ENCODE measurements at regions of chr7 and their contacts with region 1.

Region 1: DNA sequence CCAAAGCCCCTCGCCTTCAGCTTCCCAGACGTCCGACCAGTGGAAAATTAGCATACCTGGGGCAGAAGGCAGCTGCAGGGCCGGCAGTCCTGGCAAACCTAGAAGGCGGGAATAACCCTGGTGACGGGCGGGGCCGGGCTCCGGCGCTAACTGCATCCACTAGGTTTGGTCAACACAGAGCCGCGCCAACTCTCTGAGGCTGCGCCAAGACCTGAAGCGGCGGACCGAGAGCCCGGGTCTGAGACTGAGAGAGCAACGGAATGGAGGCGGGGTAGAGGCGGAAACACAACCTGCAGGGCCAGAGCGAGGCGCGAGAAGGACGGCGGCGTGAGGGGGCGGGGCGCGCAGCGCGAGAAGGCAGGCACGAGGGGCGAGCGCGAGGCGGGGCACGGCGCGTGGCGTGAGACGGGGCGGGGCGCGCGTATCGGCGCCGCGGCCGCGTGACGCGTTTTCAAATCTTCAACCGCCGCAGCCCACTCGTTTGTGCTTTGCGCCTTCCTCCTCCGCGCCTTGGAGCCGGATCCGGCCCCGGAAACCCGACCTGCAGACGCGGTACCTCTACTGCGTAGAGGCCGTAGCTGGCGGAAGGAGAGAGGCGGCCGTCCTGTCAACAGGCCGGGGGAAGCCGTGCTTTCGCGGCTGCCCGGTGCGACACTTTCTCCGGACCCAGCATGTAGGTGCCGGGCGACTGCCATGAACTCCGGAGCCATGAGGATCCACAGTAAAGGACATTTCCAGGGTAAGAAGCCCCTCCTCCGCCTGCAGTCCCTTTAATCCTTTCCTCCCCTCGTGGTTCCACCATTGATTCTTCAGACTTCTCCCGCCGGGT is at the starts of genes DBF4 and SLC25A40:
- DNase-seq: peak; percentile 91 to 99
- H3K4me3 ChIP-seq: peak within 1 kb of the TSS; percentile 92
- H3K27ac ChIP-seq: peak within 1 kb of the TSS; percentile 85
- H3K4me1 ChIP-seq: peaks cover 28% of the 10 kb centered on the region
- H3K27me3 ChIP-seq: no peaks in the 10 kb centered on the region
- CTCF ChIP-seq: no peak
- total RNA-seq, gene DBF4: 47.9 and 52.7 TPM in 2 replicates
- total RNA-seq, gene SLC25A40: 33.5 and 47.7 TPM in 2 replicates

Region 2: GRCh38 chr7:87219545-87220025 is 656.7 kb before region 1 on chr7 and contains the start of gene TMEM243:
- CTCF ChIA-PET with region 1: no interaction called
- POLR2A ChIA-PET with region 1: no interaction called
- intact Hi-C with region 1: loop called (anchors 10 kb)
- DNase-seq: peak; percentile 57 to 64
- H3K4me3 ChIP-seq: peak within 1 kb of the TSS; percentile 94
- H3K27ac ChIP-seq: peak within 1 kb of the TSS; percentile 36
- H3K4me1 ChIP-seq: peaks cover 20% of the 10 kb centered on the region
- H3K27me3 ChIP-seq: no peaks in the 10 kb centered on the region
- CTCF ChIP-seq: no peak
- total RNA-seq, gene TMEM243: 24.6 and 26.5 TPM in 2 replicates

Region 3: GRCh38 chr7:87797798-87798403 is 78.4 kb before region 1 on chr7:
- CTCF ChIA-PET with region 1: no interaction called
- POLR2A ChIA-PET with region 1: no interaction called
- intact Hi-C with region 1: loop called (anchors 5 kb)
- DNase-seq: peak in 1 of 2 experiments; percentile 35
- H3K4me3 ChIP-seq: no peak overlapping the region
- H3K27ac ChIP-seq: no peak overlapping the region
- H3K4me1 ChIP-seq: no peaks in the 10 kb centered on the region
- H3K27me3 ChIP-seq: no peaks in the 10 kb centered on the region
- CTCF ChIP-seq: peak; percentile 74

Region 4: DNA sequence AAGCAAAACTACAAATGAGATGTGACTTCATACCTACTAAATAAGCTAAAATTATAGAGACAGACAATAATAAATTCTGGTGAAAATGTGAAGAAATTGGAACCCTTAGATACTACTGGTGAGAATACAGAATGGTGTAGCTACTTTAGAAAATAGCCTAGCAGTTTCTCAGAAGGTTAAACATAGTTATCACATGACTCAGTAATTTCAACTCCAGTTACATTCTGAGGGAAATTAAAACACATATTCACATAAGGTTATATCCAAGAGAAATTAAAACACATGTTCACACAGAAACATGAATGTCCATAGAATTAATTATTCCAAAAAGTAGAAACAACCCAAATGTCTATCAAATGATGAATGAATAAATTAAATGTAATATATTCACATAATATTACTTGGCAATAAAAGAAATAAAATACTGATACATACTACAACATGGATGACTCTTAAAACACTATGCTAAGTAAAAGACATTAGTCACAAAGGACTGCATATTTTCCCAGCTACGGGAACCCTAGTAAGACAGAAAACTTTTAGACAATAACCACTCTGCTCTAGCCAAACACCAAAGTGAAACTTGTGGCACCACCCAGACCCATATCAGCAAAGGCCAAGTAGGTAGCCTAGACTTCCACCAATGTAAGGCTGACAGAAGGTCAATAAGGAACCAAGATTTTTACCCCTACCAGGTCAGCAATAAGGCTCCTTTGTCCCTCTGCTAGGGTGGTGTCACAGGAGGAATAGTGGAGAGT is 25.2 kb before region 1 on chr7:
- CTCF ChIA-PET with region 1: no interaction called
- POLR2A ChIA-PET with region 1: no interaction called
- intact Hi-C with region 1: no loop called
- DNase-seq: no peak
- H3K4me3 ChIP-seq: no peak overlapping the region
- H3K27ac ChIP-seq: no peak overlapping the region
- H3K4me1 ChIP-seq: peaks cover 7% of the 10 kb centered on the region
- H3K27me3 ChIP-seq: no peaks in the 10 kb centered on the region
- CTCF ChIP-seq: no peak

Region 5: DNA sequence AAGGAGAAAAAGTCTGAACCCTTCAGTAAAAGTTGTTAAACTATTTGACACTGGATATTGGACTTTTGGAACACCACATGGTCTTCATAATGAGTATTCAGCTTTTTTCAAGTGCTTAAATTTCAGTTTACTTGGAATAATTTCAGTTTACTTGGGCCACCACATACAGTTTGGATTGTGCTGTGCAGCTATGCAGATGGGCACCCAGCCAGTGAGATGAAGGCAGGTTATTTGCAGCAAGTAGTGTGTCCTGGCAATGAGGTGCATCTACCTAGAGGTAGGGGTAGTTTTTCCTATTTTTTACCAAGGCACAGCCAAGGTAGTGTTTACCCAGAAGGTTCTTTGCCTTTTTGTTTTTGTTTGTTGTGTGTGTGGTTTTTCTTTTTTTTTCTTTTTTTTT is 33.9 kb after region 1 on chr7:
- CTCF ChIA-PET with region 1: no interaction called
- POLR2A ChIA-PET with region 1: no interaction called
- intact Hi-C with region 1: no loop called
- DNase-seq: no peak
- H3K4me3 ChIP-seq: no peak overlapping the region
- H3K27ac ChIP-seq: no peak overlapping the region
- H3K4me1 ChIP-seq: no peaks in the 10 kb centered on the region
- H3K27me3 ChIP-seq: no peaks in the 10 kb centered on the region
- CTCF ChIP-seq: no peak

Measured in PC-9 (cell line).